ENCODE measurements at regions of chr20 and their contacts with region 1.

Region 1: GRCh38 chr20:63858393-63859165 is 2.7 kb upstream of the ABHD16B start:
- DNase-seq: peak; percentile 78 to 88 (median 79)
- ATAC-seq: peak; percentile 32 to 74 (median 52)
- H3K4me3 ChIP-seq: peak overlapping the region in 3 of 12 donors; percentile 20 to 28 (median 24)
- H3K27ac ChIP-seq: peak overlapping the region; percentile 49 to 88 (median 80)
- H3K4me1 ChIP-seq: peaks cover 28 to 80% (median 62%) of the 10 kb centered on the region in 12 donors
- H3K27me3 ChIP-seq: no peaks in the 10 kb centered on the region
- CTCF ChIP-seq: peak in 10 of 12 donors; percentile 18 to 62 (median 46)
- POLR2A ChIP-seq: no peak

Region 2: GRCh38 chr20:63537525-63538203 is 320.9 kb before region 1 on chr20:
- intact Hi-C with region 1: loop called in 5 of 10 experiments (anchors 1 to 10 kb)
- DNase-seq: peak; percentile 80 to 95 (median 87)
- ATAC-seq: peak; percentile 84 to 90 (median 87)
- H3K4me3 ChIP-seq: peak overlapping the region in 10 of 12 donors; percentile 15 to 51 (median 38)
- H3K27ac ChIP-seq: peak overlapping the region in 7 of 12 donors; percentile 12 to 91 (median 39)
- H3K4me1 ChIP-seq: peaks cover 0 to 28% (median 13%) of the 10 kb centered on the region in 12 donors
- H3K27me3 ChIP-seq: peaks cover 0 to 41% (median 2%) of the 10 kb centered on the region in 9 donors
- CTCF ChIP-seq: peak; percentile 94 to 98 (median 96)
- POLR2A ChIP-seq: no peak

Region 3: DNA sequence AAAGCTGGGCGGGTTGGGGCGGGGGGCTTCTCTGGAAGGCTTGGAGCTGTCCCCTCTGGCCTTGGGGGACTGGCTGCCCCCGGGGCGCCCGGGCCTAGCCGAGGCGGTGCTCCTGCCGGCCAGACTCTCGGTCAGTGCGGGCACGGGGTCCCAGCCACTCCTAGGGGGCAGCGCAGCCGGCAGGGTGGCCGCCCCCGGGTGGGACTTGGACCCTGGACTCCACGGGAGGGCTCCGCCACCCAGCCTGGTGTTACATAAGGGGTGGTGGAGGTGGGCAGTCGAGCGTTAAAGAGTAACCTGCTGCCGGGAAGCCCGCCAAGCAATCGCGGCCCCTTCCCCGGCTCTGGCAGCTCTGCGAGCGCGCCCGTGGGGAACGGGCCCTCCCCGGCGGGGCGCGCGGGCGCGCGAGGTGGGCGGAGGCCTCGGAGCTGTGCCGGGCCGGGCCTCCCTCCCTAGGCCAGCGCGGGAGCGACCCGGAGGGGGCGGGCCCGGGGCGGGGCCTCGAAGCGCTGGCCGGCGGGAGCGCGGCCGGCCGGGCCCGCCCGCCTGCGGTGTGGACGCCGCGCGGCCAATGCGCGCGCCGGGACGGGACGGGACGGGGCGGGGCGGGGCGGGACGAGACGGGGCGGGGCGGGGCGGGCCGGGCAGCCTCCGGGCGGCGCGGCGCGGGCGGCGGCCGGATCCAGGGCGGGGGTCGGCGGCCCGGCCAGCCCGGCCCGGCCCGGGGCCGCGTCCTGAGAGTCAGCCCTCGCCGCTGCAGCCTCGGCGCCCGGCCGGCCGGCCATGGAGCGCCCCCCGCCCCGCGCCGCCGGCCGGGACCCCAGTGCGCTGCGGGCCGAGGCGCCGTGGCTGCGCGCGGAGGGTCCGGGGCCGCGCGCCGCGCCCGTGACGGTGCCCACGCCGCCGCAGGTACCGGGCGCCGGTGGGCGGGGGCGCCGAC is 119.2 kb before region 1 on chr20 and contains the start of gene SLC2A4RG:
- intact Hi-C with region 1: no loop called
- DNase-seq: peak; percentile 81 to 92 (median 87)
- ATAC-seq: peak; percentile 50 to 73 (median 63)
- H3K4me3 ChIP-seq: peak within 1 kb of the TSS; percentile 51 to 95 (median 68)
- H3K27ac ChIP-seq: peak within 1 kb of the TSS; percentile 87 to 100 (median 96)
- H3K4me1 ChIP-seq: peaks cover 9 to 46% (median 35%) of the 10 kb centered on the region in 12 donors
- H3K27me3 ChIP-seq: no peaks in the 10 kb centered on the region
- CTCF ChIP-seq: no peak
- POLR2A ChIP-seq: no peak
- total RNA-seq, gene SLC2A4RG: 41.4 to 82.5 (median 70.7) TPM

Region 4: DNA sequence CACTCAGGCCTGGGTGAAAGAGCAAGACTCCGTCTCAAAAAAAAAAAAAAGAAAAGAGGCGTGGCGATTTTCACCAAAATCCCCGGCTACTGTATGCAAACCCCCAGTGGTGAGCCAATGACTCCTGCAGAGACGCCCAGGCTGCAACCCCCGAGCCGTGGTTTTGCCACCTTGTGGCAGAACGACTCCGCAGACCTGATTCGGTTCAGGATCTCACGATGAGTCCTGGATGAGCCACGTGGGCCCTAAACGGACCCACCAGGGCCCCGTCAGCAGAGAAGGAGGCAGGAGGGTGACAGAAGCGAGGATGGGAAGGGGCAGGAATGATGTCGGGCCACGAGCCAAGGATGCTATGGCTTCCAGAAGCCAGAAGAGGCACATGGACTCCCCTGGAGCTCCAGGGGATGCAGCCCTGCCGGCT is 76.5 kb before region 1 on chr20:
- intact Hi-C with region 1: loop called in 6 of 10 experiments (anchors 2 to 5 kb)
- DNase-seq: peak in 1 of 5 donors; percentile 58
- ATAC-seq: no peak
- H3K4me3 ChIP-seq: no peak overlapping the region
- H3K27ac ChIP-seq: no peak overlapping the region
- H3K4me1 ChIP-seq: peaks cover 0 to 22% (median 15%) of the 10 kb centered on the region in 12 donors
- H3K27me3 ChIP-seq: no peaks in the 10 kb centered on the region
- CTCF ChIP-seq: no peak
- POLR2A ChIP-seq: no peak

Region 5: GRCh38 chr20:63791497-63792156 is 67.0 kb before region 1 on chr20:
- intact Hi-C with region 1: loop called in 8 of 10 experiments (anchors 2 to 5 kb)
- DNase-seq: peak in 3 of 5 donors; percentile 75 to 81 (median 81)
- ATAC-seq: peak; percentile 19 to 51 (median 32)
- H3K4me3 ChIP-seq: peak overlapping the region in 5 of 12 donors; percentile 1 to 12 (median 4)
- H3K27ac ChIP-seq: peak overlapping the region; percentile 57 to 88 (median 74)
- H3K4me1 ChIP-seq: peaks cover 4 to 65% (median 46%) of the 10 kb centered on the region in 12 donors
- H3K27me3 ChIP-seq: no peaks in the 10 kb centered on the region
- CTCF ChIP-seq: no peak
- POLR2A ChIP-seq: no peak

Region 6: DNA sequence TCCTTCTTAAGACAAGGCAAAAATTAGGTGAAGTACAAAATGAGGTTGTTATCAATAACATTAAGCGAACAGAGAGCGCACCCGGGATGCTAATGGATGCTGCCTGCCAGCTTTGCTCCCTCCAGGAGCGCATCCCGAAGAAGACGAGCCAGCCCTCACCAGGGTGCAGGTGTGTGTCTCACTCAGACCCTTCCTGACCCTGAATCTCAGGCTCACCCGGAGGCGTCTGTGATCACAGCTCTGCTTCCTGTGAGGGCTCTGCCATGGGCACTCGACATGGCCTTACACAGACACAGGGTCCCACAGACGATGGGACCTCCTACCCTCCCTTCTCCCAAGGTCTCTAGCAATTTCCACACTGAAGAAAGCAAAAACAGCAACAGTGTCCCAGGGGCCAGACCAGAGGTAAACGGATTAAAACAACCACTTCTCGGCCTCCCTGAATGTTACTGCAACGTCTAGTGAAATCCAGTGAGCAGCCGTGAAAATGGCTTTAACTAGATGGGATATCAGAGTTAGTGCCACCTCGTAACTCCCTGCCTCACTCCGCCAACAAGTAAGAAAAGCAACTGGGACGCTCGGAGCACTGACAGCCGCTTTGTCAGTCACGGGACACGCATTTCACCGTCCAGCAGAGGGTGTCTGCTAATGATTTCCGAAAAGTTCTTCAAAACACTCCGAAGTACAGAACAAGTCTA is 39.2 kb before region 1 on chr20:
- intact Hi-C with region 1: loop called in 7 of 10 experiments (anchors 5 to 10 kb)
- DNase-seq: no peak
- ATAC-seq: peak in 3 of 4 donors; percentile 33 to 61 (median 53)
- H3K4me3 ChIP-seq: peak overlapping the region in 2 of 12 donors; percentile 2 to 32
- H3K27ac ChIP-seq: peak overlapping the region in 5 of 12 donors; percentile 11 to 50 (median 28)
- H3K4me1 ChIP-seq: peaks cover 0 to 57% (median 33%) of the 10 kb centered on the region in 12 donors
- H3K27me3 ChIP-seq: no peaks in the 10 kb centered on the region
- CTCF ChIP-seq: peak in 11 of 12 donors; percentile 15 to 57 (median 41)
- POLR2A ChIP-seq: no peak

Region 7: DNA sequence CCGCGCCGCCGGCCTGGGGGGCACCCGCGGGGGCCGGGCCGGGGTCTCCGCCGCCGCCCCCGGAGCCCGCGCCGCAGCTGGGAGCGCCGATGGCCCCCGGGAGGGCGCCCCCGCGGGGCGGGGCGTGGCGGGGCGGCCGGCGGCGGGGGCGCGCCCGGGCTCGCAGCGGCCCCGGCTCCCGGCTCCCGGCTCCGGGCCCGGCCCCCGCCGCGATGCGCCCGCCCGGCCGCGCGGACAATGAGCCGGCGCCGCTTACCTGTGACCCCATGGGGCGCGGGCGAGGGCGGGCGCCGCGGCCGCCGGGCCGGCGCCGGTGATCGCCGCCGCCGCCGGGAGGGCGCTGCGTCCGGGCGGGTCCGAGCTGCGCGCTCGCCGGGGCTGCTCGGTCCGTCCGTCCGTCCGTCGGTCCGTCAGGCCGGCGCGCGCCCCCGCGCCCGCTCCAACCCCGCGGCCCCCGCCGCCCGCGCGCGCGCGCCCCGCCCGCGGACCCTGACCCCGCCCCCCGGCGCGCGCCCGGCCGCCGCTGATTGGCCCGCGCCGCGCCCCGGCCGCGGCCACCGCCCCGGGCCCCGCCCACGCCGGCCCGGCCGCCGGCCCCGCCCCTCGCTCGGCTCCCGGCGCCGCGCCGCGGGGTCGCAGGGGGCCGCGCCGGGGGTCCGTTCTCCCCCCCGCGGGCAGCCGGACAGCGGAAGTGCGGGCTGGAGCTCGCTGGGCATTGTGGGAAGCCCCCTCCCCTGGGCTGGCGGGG is 27.6 kb before region 1 on chr20 and contains the start of gene ZBTB46:
- intact Hi-C with region 1: loop called in 4 of 10 experiments (anchors 2 to 5 kb)
- DNase-seq: peak; percentile 62 to 86 (median 80)
- ATAC-seq: peak in 3 of 4 donors; percentile 11 to 44 (median 28)
- H3K4me3 ChIP-seq: peak within 1 kb of the TSS; percentile 48 to 99 (median 79)
- H3K27ac ChIP-seq: peak within 1 kb of the TSS; percentile 80 to 97 (median 90)
- H3K4me1 ChIP-seq: peaks cover 13 to 77% (median 60%) of the 10 kb centered on the region in 12 donors
- H3K27me3 ChIP-seq: peaks cover 0 to 27% (median 0%) of the 10 kb centered on the region in 9 donors
- CTCF ChIP-seq: no peak
- POLR2A ChIP-seq: peak in 1 of 2 donors; percentile 10
- total RNA-seq, gene ZBTB46: 11.2 to 27.4 (median 14.4) TPM

Region 8: DNA sequence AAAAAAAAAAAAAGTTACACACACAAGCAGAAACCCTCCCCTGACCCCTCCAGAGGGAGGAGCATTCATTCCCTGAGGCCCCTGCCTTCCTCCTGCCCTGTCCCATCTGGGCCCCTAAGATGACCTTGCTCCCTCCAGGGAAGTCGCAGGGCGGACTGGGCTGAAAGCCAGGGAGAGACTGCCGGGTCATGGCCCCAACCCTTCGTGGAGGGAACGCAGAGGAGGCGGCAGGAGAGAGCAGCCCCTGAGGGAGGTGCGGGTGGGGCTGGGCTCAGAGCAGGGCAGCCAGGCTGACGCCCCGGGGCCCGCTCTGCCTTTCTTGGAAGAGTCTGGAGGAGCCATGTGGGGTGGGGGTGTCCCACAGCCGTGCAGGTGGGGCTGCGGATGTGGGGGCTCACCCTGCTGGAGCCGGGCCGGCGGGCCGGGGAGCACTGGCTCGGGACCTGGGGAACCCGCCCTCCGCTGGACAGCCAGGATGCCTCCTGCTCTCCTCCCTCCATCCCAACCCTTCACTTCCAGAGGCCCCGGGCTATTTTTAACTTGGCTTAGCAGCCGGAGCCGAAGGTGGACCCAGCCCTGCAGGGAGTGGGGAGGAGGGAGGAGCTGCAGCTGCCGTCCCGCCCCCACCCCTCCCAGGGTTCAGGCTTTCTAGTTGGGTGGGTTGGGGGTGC is 12.3 kb before region 1 on chr20:
- intact Hi-C with region 1: loop called in 1 of 10 experiments (anchors 1 kb)
- DNase-seq: peak; percentile 85 to 91 (median 90)
- ATAC-seq: peak; percentile 79 to 87 (median 84)
- H3K4me3 ChIP-seq: peak overlapping the region in 11 of 12 donors; percentile 3 to 50 (median 43)
- H3K27ac ChIP-seq: peak overlapping the region; percentile 71 to 96 (median 84)
- H3K4me1 ChIP-seq: peaks cover 0 to 53% (median 44%) of the 10 kb centered on the region in 12 donors
- H3K27me3 ChIP-seq: peaks cover 0 to 33% (median 0%) of the 10 kb centered on the region in 9 donors
- CTCF ChIP-seq: peak in 3 of 12 donors; percentile 7 to 37 (median 20)
- POLR2A ChIP-seq: no peak

Measured in heart left ventricle (tissue), 16 donors.